Colonic mucosa (tissue), 4 donors: ENCODE measurements at regions of chr13 and their contacts with region 1.

Region 1: GRCh38 chr13:41132512-41133152 is at the start of gene KBTBD6:
- DNase-seq: peak; percentile 98
- H3K4me3 ChIP-seq: peak within 1 kb of the TSS; percentile 61
- H3K27ac ChIP-seq: peak within 1 kb of the TSS; percentile 58
- H3K4me1 ChIP-seq: no peaks in the 10 kb centered on the region
- H3K27me3 ChIP-seq: no peaks in the 10 kb centered on the region
- CTCF ChIP-seq: no peak
- total RNA-seq, gene KBTBD6: 3.1 to 5.1 TPM

Region 2: GRCh38 chr13:41196620-41197019 is 64.0 kb after region 1 on chr13:
- intact Hi-C with region 1: loop called (anchors 5 kb)
- DNase-seq: no peak
- H3K4me3 ChIP-seq: no peak overlapping the region
- H3K27ac ChIP-seq: no peak overlapping the region
- H3K4me1 ChIP-seq: no peaks in the 10 kb centered on the region
- H3K27me3 ChIP-seq: no peaks in the 10 kb centered on the region
- CTCF ChIP-seq: no peak

Region 3: GRCh38 chr13:41452462-41452861 is 319.8 kb after region 1 on chr13:
- intact Hi-C with region 1: no loop called
- DNase-seq: no peak
- H3K4me3 ChIP-seq: no peak overlapping the region
- H3K27ac ChIP-seq: no peak overlapping the region
- H3K4me1 ChIP-seq: no peaks in the 10 kb centered on the region
- H3K27me3 ChIP-seq: peaks cover 10% of the 10 kb centered on the region
- CTCF ChIP-seq: no peak